PC-3 (cell line): ENCODE measurements at regions of chr6 and their contacts with region 1.

Region 1: DNA sequence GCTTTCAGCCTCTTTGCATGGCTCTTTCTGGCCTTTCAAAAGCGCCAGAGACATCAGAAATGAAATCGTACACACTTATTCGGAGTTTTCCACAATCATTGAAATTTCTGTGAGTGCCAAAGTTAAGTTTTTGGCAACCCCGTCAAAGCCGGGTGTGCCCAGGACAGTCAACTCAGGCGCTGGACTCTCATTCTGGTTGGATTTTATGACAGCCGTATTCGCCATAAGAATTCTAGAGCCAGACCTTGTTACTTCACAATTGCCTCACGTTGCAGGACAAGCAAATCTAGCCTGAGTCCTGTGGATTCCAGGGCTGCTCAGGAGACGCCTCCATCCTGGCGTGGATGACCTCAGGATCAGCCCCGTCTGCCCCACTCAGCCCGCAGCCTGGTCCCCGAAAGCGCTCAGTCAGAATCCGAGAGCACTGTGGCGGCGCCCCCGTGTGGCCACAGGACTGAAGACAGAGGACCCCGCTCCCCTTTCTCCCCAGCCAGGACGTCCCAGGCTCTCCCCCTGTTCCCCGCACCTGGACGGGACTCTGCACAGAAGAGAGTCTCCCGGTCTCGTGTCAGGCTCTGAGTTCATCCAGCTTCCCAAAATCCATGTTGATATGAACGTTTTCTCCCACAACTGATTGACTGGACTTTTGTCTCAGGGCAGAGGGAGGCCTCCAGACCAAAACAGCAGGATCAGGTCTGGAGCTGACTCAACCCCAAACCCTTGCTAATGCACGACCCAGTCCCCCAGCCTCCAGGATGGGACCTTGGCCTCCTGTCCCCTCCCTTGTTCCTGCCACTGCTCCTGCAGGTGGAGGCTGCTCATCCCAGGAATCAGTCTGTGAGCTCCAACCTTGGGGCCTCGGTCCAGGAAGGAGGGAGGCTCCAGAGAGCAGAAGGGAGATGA is 38.2 kb downstream of the MICA start:
- DNase-seq: peak; percentile 66
- ATAC-seq: peak; percentile 93
- H3K4me3 ChIP-seq: peak overlapping the region; percentile 53; the same call in 1 of the 2 replicates
- H3K27ac ChIP-seq: no peak overlapping the region
- H3K4me1 ChIP-seq: no peaks in the 10 kb centered on the region
- H3K27me3 ChIP-seq: no peaks in the 10 kb centered on the region
- CTCF ChIP-seq: peak; percentile 93

Region 2: GRCh38 chr6:30386166-30386565 is 1055.5 kb before region 1 on chr6:
- CTCF ChIA-PET with region 1: no interaction called
- POLR2A ChIA-PET with region 1: no interaction called
- intact Hi-C with region 1: no loop called
- DNase-seq: no peak
- ATAC-seq: no peak
- H3K4me3 ChIP-seq: no peak overlapping the region
- H3K27ac ChIP-seq: no peak overlapping the region
- H3K4me1 ChIP-seq: no peaks in the 10 kb centered on the region
- H3K27me3 ChIP-seq: peaks cover 63% of the 10 kb centered on the region
- CTCF ChIP-seq: no peak

Region 3: GRCh38 chr6:31366693-31367470 is 74.7 kb before region 1 on chr6:
- CTCF ChIA-PET with region 1: interaction called, 14 read pairs
- POLR2A ChIA-PET with region 1: no interaction called
- intact Hi-C with region 1: no loop called
- DNase-seq: peak; percentile 96
- ATAC-seq: peak; percentile 99
- H3K4me3 ChIP-seq: peak overlapping the region; percentile 65
- H3K27ac ChIP-seq: no peak overlapping the region
- H3K4me1 ChIP-seq: peaks cover 8% of the 10 kb centered on the region; the same call in 1 of the 2 replicates
- H3K27me3 ChIP-seq: peaks cover 21% of the 10 kb centered on the region
- CTCF ChIP-seq: peak; percentile 94

Region 4: GRCh38 chr6:31396422-31397152 is 45.0 kb before region 1 on chr6:
- CTCF ChIA-PET with region 1: interaction called, 15 read pairs
- POLR2A ChIA-PET with region 1: no interaction called
- intact Hi-C with region 1: loop called (anchors 1 kb)
- DNase-seq: peak; percentile 93
- ATAC-seq: peak; percentile 25
- H3K4me3 ChIP-seq: no peak overlapping the region
- H3K27ac ChIP-seq: no peak overlapping the region
- H3K4me1 ChIP-seq: peaks cover 20% of the 10 kb centered on the region
- H3K27me3 ChIP-seq: no peaks in the 10 kb centered on the region
- CTCF ChIP-seq: peak; percentile 80

Region 5: GRCh38 chr6:31403283-31403989 is 38.2 kb before region 1 on chr6 and contains the start of gene MICA:
- CTCF ChIA-PET with region 1: interaction called, 15 read pairs
- POLR2A ChIA-PET with region 1: interaction called, 3 read pairs
- intact Hi-C with region 1: no loop called
- DNase-seq: peak; percentile 94
- ATAC-seq: peak; percentile 65
- H3K4me3 ChIP-seq: peak within 1 kb of the TSS; percentile 97
- H3K27ac ChIP-seq: peak within 1 kb of the TSS; percentile 40
- H3K4me1 ChIP-seq: peaks cover 49% of the 10 kb centered on the region
- H3K27me3 ChIP-seq: no peaks in the 10 kb centered on the region
- CTCF ChIP-seq: no peak
- total RNA-seq, gene MICA: 33.1 and 35.0 TPM in 2 replicates

Region 6: DNA sequence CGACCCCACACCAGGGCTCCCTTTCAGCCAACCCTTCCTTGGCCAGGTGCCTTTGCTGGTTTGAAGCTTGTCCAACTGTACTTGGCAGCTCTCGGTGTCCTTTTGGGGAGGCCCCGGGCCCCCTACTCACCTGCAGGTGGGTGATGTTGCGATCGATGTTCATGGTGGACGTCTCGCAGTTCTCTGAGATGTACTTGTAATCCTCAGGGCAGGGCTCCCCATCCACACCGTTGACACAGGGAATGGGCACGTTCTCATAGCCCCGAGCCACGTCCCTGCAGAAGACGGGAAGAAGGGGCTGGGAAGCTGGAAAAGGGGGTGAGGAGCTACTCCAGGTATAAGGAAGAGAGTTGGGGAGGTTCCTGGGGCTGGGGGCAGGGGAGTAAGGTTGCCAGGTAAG is 442.1 kb after region 1 on chr6:
- CTCF ChIA-PET with region 1: interaction called, 12 read pairs
- POLR2A ChIA-PET with region 1: no interaction called
- intact Hi-C with region 1: no loop called
- DNase-seq: no peak
- ATAC-seq: no peak
- H3K4me3 ChIP-seq: no peak overlapping the region
- H3K27ac ChIP-seq: no peak overlapping the region
- H3K4me1 ChIP-seq: peaks cover 7% of the 10 kb centered on the region
- H3K27me3 ChIP-seq: no peaks in the 10 kb centered on the region
- CTCF ChIP-seq: no peak